ENCODE measurements at regions of chr1 and their contacts with region 1.

Region 1: GRCh38 chr1:172380441-172381244 is 39.8 kb upstream of the C1orf105 start:
- DNase-seq: peak; percentile 65
- H3K4me3 ChIP-seq: peak overlapping the region in 1 of 3 experiments; percentile 24
- H3K27ac ChIP-seq: peak overlapping the region; percentile 73
- H3K4me1 ChIP-seq: peaks cover 39% of the 10 kb centered on the region
- H3K27me3 ChIP-seq: no peaks in the 10 kb centered on the region
- CTCF ChIP-seq: no peak
- POLR2A ChIP-seq: no peak

Region 2: DNA sequence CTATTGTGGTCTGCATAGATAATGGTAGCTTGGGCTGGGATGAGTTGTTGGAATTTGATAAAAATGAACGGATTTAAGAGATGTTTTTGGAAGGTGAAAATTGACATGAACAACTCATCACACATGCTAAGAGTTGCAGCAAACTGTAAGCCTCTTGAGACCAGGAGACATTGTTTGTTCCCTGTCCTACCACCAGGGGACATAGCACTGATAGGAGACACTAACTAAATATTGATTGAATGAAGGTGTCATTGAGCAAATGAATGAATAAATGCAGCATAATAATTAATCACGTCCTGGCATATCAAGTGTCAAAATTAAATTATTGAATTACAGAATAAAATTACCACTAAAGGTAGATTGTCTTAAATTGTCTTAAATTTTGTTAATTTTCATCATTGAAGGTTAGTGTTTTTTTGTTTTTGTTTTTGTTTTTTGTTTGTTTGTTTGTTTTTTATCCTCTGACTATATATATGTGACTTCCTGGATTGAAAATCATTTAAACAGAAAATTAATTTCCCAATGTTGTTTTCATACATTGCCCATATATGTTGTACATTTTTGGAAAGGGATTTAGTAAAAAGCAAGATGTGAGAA is 245.5 kb before region 1 on chr1:
- CTCF ChIA-PET with region 1: no interaction called
- POLR2A ChIA-PET with region 1: no interaction called
- dilution Hi-C with region 1: no loop called
- intact Hi-C with region 1: loop called (anchors 1 kb)
- DNase-seq: no peak
- H3K4me3 ChIP-seq: no peak overlapping the region
- H3K27ac ChIP-seq: no peak overlapping the region
- H3K4me1 ChIP-seq: peaks cover 13% of the 10 kb centered on the region
- H3K27me3 ChIP-seq: no peaks in the 10 kb centered on the region
- CTCF ChIP-seq: peak; percentile 32 to 44
- POLR2A ChIP-seq: no peak

Region 3: GRCh38 chr1:172390683-172391551 is 10.3 kb after region 1 on chr1:
- CTCF ChIA-PET with region 1: interaction called, 10 read pairs
- POLR2A ChIA-PET with region 1: no interaction called
- dilution Hi-C with region 1: no loop called
- intact Hi-C with region 1: no loop called
- DNase-seq: peak; percentile 28
- H3K4me3 ChIP-seq: no peak overlapping the region
- H3K27ac ChIP-seq: no peak overlapping the region
- H3K4me1 ChIP-seq: peaks cover 8% of the 10 kb centered on the region
- H3K27me3 ChIP-seq: no peaks in the 10 kb centered on the region
- CTCF ChIP-seq: no peak
- POLR2A ChIP-seq: no peak

Region 4: DNA sequence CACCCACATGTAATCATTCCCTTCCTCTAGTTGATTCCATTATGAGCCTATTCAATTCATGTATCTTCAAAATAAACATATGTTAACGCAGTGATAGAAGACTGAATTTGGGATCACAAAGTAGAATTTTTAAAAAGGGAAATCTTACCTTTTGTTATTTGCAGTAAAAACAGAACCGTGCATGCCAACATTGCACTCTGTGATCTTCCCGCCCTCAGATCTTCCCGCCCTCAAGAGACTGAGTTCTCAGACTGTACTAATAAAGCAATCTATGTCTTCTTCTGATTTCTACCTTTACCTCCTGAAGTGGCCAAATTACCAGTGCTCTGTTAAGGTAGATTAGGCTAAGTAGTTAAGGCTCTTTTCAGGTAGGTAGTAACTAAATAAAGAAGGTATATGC is 148.7 kb after region 1 on chr1:
- CTCF ChIA-PET with region 1: no interaction called
- POLR2A ChIA-PET with region 1: no interaction called
- dilution Hi-C with region 1: no loop called
- intact Hi-C with region 1: no loop called
- DNase-seq: no peak
- H3K4me3 ChIP-seq: no peak overlapping the region
- H3K27ac ChIP-seq: no peak overlapping the region
- H3K4me1 ChIP-seq: peaks cover 9% of the 10 kb centered on the region
- H3K27me3 ChIP-seq: peaks cover 7 to 17% of the 10 kb centered on the region in 2 experiments
- CTCF ChIP-seq: no peak
- POLR2A ChIP-seq: no peak

Measured in endothelial cell of umbilical vein (primary cell).